Aorta (tissue), 5 donors: ENCODE measurements at regions of chrX and their contacts with region 1.

Region 1: DNA sequence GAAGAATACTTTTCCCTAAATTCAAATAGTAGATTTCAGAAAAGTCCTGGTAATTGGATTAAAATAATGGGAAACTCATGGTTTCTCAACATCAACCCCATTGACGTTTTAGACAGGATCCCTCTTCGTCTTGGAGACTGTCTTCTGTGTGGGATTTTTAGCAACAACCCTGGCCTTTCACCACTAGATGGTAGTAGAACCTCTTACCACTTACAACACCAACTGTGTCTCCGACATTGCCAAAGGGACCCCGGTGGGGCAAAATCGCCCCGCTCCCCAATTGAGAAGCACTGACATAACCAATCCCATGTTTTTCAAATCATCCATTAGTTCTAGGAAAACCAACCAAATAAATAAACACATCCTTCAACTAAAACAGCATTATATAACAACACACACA is 16.9 kb upstream of the ANOS1 start:
- DNase-seq: no peak
- ATAC-seq: no peak
- H3K4me3 ChIP-seq: no peak overlapping the region
- H3K27ac ChIP-seq: no peak overlapping the region
- H3K4me1 ChIP-seq: no peaks in the 10 kb centered on the region
- H3K27me3 ChIP-seq: no peaks in the 10 kb centered on the region

Region 2: GRCh38 chrX:8668813-8669212 is 80.0 kb before region 1 on chrX:
- intact Hi-C with region 1: no loop called
- DNase-seq: no peak
- ATAC-seq: no peak
- H3K4me3 ChIP-seq: no peak overlapping the region
- H3K27ac ChIP-seq: no peak overlapping the region
- H3K4me1 ChIP-seq: no peaks in the 10 kb centered on the region
- H3K27me3 ChIP-seq: no peaks in the 10 kb centered on the region

Region 3: DNA sequence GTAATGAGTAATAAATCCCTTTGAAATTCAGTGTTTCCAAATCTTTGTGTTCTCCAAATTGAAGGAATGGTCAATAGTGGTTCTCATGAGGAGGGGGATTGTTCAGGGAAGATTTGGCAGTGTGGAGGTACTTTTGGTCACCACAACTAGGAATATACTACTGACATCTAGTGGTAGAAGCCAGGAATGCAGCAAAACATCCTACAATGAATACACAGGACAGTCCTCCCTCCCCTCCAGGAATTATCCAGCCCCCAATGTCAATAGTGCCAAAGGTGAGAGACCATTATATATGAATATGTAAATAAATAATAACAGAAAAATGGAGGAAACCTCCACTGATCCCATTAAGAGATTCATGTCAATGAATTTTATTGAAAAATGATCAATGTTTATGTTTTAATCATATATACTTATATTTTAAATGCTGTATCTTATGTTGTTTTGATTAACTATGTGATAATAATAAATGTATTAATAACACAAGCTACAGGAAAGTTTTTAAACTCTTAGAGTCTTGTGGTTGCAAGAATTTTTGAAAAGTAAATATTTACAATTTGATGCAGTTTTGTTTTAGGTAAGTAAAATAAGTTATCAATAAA is 66.7 kb after region 1 on chrX:
- intact Hi-C with region 1: loop called in 1 of 2 experiments (anchors 5 kb)
- DNase-seq: no peak
- ATAC-seq: no peak
- H3K4me3 ChIP-seq: no peak overlapping the region
- H3K27ac ChIP-seq: no peak overlapping the region
- H3K4me1 ChIP-seq: no peaks in the 10 kb centered on the region
- H3K27me3 ChIP-seq: no peaks in the 10 kb centered on the region